ENCODE measurements at regions of chr1 and their contacts with region 1.

Region 1: DNA sequence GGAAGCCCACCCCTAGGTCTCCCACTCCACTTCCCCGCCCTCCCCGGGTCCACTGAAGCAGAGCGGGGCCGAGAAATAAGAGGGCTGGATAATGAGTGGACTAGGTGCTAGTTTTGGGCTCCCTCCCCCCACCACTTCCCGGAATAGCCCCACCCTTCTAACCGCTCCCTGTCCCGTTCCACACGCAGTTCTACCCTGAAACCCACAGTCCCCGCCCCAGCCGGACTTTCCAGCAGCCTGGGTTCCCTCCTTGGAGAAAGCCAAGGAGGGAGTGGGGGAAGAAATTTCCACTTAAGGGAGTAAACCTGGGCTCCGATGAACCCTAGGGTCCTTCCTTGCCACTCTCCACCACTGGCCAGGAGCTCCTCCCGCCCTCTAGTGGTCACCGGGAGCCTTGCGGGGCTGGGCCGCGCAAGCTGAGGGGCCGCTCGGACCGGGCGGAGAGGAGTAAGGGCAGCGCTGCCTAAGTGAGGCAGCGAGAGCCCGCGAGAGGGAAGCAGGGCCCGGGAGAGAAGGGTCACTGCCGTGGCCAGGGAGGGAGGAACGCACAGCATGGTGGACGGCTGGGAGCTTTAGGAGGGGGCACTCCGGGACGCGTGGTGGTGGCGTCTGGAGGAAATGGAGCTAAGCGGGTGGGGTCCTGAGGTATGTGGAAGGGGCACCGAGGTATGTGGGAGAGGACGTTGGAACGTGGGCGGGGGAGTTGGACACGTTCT is 14.3 kb downstream of the THBS3 start:
- DNase-seq: peak; percentile 40 to 79 (median 60)
- ATAC-seq: peak; percentile 6 to 17
- H3K4me3 Mint-ChIP-seq: peak overlapping the region; percentile 77 to 97 (median 90)
- H3K27ac Mint-ChIP-seq: peak overlapping the region; percentile 93 to 100 (median 98)
- H3K4me1 Mint-ChIP-seq: peaks cover 18 to 33% (median 26%) of the 10 kb centered on the region in 4 donors
- H3K27me3 Mint-ChIP-seq: peaks cover 0 to 2% (median 0%) of the 10 kb centered on the region in 5 donors

Region 2: DNA sequence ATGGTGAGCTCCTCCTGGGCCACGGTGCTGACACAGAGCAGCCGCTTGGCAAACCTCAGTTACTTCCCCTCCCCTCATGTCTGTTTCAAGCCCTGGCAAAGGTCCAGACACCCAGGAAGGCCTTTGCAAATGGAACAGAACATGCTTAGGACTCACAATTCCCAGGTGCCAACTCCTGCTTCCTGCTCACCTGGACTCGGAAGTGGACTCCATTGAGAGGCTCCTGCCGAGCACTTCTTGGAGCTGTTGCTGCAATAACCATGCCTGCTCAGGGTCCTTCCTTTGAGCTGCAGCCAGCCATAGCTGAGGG is 170.6 kb before region 1 on chr1:
- POLR2A ChIA-PET with region 1: no interaction called
- DNase-seq: no peak
- ATAC-seq: no peak
- H3K4me3 Mint-ChIP-seq: no peak overlapping the region
- H3K27ac Mint-ChIP-seq: no peak overlapping the region
- H3K4me1 Mint-ChIP-seq: peaks cover 3 to 12% (median 9%) of the 10 kb centered on the region in 4 donors
- H3K27me3 Mint-ChIP-seq: peaks cover 0 to 28% (median 5%) of the 10 kb centered on the region in 5 donors

Region 3: GRCh38 chr1:155227261-155228095 is 34.0 kb after region 1 on chr1:
- POLR2A ChIA-PET with region 1: interaction called, 27 read pairs
- DNase-seq: peak; percentile 91 to 99 (median 98)
- ATAC-seq: peak; percentile 91 to 92
- H3K4me3 Mint-ChIP-seq: peak overlapping the region; percentile 74 to 93 (median 87)
- H3K27ac Mint-ChIP-seq: peak overlapping the region; percentile 84 to 98 (median 94)
- H3K4me1 Mint-ChIP-seq: peaks cover 6 to 46% (median 24%) of the 10 kb centered on the region in 4 donors
- H3K27me3 Mint-ChIP-seq: no peaks in the 10 kb centered on the region